ENCODE measurements at regions of chr9 and their contacts with region 1.

Region 1: GRCh38 chr9:68999393-69000105 is 14.4 kb downstream of the PRKACG start:
- DNase-seq: peak; percentile 80
- H3K4me3 Mint-ChIP-seq: no peak overlapping the region
- H3K27ac Mint-ChIP-seq: no peak overlapping the region
- H3K4me1 Mint-ChIP-seq: peaks cover 29% of the 10 kb centered on the region
- H3K27me3 Mint-ChIP-seq: peaks cover 23% of the 10 kb centered on the region

Region 2: DNA sequence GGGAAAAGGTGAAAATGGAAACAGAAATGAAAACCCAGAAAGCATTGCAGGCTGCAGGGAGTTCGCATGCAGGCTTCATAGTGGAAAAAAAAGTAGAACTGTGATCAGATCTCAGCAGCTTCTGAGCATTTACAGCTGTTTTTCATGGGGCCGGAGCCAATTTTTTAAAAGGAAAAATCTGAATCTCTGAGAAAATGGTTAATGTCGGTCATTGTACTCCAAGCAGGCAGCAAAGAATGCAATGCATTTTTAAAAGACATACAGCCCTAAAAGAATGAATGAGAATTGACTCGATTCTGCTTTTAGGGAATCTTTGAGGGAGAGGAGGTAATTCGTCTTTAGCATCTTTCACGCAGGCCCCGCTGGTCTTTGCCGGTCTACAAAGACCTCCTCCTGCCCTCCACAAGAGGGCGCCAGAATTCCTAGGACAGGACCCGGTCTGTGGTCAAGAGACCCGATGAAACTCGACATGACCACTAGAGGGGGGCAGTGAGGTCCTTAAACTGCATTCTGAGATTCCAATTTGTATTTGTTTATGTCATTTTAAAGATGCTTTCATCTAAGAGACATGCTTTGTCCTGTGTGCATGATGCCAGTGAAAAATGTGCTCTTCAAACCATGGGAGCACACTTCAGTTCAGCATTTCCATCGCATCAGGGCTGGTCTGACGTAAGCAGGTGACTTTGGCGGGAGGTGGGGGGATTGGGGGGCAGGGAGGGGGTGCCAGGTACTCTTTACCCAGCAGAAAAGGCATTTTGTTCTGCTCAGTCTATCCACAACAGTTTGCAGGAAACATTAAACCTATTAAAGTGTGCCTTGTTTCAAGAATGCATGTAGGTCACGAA is 415.1 kb before region 1 on chr9:
- CTCF ChIA-PET with region 1: interaction called, 15 read pairs
- DNase-seq: peak; percentile 89
- H3K4me3 Mint-ChIP-seq: no peak overlapping the region
- H3K27ac Mint-ChIP-seq: no peak overlapping the region
- H3K4me1 Mint-ChIP-seq: peaks cover 3% of the 10 kb centered on the region
- H3K27me3 Mint-ChIP-seq: peaks cover 14% of the 10 kb centered on the region

Region 3: GRCh38 chr9:68949271-68950000 is 50.1 kb before region 1 on chr9:
- CTCF ChIA-PET with region 1: interaction called, 39 read pairs
- DNase-seq: peak; percentile 59
- H3K4me3 Mint-ChIP-seq: no peak overlapping the region
- H3K27ac Mint-ChIP-seq: no peak overlapping the region
- H3K4me1 Mint-ChIP-seq: peaks cover 17% of the 10 kb centered on the region
- H3K27me3 Mint-ChIP-seq: peaks cover 17% of the 10 kb centered on the region

Region 4: GRCh38 chr9:68955330-68955729 is 44.2 kb before region 1 on chr9:
- CTCF ChIA-PET with region 1: interaction called, 39 read pairs
- DNase-seq: no peak
- H3K4me3 Mint-ChIP-seq: no peak overlapping the region
- H3K27ac Mint-ChIP-seq: no peak overlapping the region
- H3K4me1 Mint-ChIP-seq: peaks cover 21% of the 10 kb centered on the region
- H3K27me3 Mint-ChIP-seq: peaks cover 3% of the 10 kb centered on the region

Region 5: DNA sequence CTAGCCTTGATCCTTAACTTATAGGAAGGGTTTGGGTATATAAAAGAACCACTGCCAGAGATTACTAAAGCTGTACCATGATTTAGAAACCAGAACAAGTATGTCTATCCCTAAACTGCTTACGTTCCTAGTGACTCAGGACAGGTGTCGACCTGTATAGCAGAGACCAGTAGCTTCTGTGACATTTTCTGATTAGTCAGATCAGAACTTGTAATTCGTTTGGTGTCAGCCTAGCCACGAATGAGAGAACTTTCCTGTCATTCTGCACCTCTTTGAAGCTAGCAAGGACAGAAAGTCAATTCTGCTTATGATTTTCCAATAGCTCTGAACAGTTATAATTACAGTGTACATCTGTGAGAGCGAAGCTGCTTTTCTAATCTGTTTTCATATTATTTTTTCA is 25.1 kb before region 1 on chr9:
- CTCF ChIA-PET with region 1: interaction called, 27 read pairs
- DNase-seq: no peak
- H3K4me3 Mint-ChIP-seq: no peak overlapping the region
- H3K27ac Mint-ChIP-seq: peak overlapping the region; percentile 72
- H3K4me1 Mint-ChIP-seq: peaks cover 36% of the 10 kb centered on the region
- H3K27me3 Mint-ChIP-seq: no peaks in the 10 kb centered on the region

Region 6: DNA sequence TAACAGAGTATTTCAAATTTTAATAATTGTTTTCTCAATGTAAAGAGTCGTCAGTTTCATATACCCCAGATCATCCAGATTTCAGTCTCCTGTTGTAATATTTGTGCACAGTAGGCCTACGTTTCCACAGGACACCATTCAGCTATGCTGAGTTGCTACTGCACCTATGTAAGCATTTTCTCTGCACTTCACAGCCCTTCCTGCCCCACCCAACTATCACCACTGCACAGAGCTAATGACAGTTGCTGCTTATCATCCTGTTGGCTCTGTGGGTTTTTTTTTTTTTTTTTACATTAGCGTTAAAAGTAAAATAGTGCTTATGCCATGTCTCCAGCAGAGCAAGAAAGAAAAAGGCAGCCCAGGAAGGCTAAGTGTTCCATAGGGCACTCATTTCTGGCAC is 20.3 kb after region 1 on chr9:
- CTCF ChIA-PET with region 1: interaction called, 10 read pairs
- DNase-seq: peak; percentile 76
- H3K4me3 Mint-ChIP-seq: no peak overlapping the region
- H3K27ac Mint-ChIP-seq: peak overlapping the region; percentile 81
- H3K4me1 Mint-ChIP-seq: peaks cover 60% of the 10 kb centered on the region
- H3K27me3 Mint-ChIP-seq: peaks cover 31% of the 10 kb centered on the region